Activated naive CD4-positive, alpha-beta T cell treated with anti-CD3 and anti-CD28 coated beads for 36 hours (primary cell): ENCODE measurements at regions of chr10 and their contacts with region 1.

Region 1: DNA sequence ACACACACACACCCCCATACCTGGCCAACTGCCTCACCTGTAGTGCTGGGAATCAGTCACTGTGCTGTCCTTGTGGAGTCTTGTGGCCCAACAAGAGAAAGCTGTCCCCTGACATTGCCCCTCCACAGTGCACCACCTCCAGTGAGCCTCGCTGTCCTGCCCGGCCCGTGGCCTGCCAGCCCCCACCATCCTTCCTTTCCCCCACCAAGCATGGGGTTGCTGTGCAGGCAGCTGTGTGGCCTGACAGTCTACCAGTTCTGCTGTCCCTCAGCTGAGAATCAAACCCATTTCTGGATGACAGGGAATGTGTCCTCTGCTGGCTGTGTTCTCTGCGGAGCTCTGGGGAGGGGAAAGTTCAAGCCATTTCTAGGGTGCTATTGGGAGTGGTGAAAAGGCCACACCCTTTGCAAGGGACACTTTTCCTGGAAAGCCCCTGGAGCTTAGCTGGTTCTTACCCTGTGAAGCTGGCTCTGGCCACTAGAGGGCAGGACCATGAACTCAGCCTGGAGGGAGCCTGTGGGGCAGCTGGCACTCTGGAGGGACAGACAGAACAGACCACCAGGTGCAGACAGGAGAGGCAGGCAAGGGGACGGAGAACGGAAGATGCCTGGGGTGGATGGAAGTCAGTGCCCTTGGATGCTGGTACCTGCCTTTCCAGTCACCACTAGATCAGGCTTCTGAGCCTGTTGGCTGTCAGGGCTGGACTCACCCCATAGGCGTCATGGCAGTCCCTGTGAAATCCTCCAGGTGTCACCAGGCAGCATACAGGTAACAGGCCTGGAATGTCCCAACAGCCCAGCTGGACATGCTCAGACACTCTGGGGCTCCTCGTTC is 10.5 kb upstream of the MTPAP start:
- DNase-seq: peak; percentile 78
- H3K4me3 Mint-ChIP-seq: no peak overlapping the region
- H3K27ac Mint-ChIP-seq: no peak overlapping the region
- H3K4me1 Mint-ChIP-seq: peaks cover 2% of the 10 kb centered on the region
- H3K27me3 Mint-ChIP-seq: no peaks in the 10 kb centered on the region

Region 2: DNA sequence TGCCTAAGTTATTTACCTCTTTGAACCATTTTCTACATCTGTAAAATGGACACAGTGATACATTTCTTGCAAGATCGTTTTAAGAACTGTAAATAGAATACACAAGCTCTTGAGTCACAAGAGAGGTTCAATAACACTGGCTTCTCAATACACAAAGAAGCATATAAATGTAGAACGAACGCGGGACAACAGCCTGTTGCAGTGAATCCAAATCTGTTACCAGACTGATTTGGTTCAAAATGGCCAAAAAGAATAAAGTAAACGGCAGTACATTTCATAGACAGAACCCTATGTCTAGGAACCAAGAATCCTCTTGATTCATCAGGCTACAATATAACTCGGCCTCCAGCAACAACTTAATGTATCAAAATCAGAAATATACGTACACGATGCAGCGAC is 11.2 kb before region 1 on chr10:
- CTCF ChIA-PET with region 1: interaction called, 35 read pairs
- intact Hi-C with region 1: no loop called
- DNase-seq: no peak
- H3K4me3 Mint-ChIP-seq: peak overlapping the region; percentile 96
- H3K27ac Mint-ChIP-seq: peak overlapping the region; percentile 95
- H3K4me1 Mint-ChIP-seq: peaks cover 41% of the 10 kb centered on the region
- H3K27me3 Mint-ChIP-seq: no peaks in the 10 kb centered on the region

Region 3: DNA sequence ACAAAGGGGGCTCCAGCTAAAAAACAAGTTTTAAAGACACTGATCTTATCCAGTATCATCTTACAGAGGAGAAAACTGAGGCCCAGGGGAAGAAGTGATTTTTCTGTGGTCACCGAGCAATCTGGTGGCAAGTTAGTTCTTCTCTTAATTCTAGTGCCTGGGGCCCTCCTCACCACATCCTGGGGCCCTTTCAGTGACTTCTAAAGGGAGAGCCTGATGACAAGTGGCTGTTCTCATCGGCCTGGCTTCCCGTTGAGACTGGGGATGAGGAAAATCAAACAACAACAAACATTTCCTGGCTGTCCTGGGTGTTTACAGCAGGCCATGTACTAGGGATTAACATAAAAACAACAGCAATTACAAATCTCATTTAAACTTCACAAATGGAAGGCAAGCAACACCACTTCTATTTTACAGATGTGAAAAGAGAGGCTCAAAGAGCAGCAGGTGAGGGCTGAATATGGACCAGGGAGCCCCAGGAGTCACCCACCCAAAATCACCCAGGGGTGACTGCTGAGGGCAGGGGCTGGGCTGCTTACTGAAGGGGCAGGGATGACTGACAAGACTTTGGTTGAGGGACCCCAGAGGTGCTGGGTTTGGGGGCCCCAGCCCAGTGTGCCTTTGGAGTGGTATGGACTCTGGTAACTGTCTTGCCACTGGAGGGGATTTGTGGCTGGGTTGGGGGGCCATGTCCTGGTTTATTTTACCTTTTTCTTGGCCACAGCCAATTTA is 14.2 kb after region 1 on chr10:
- CTCF ChIA-PET with region 1: interaction called, 17 read pairs
- intact Hi-C with region 1: loop called (anchors 1 kb)
- DNase-seq: peak; percentile 77
- H3K4me3 Mint-ChIP-seq: no peak overlapping the region
- H3K27ac Mint-ChIP-seq: peak overlapping the region; percentile 74
- H3K4me1 Mint-ChIP-seq: peaks cover 25% of the 10 kb centered on the region
- H3K27me3 Mint-ChIP-seq: no peaks in the 10 kb centered on the region

Region 4: GRCh38 chr10:30384701-30385201 is 25.2 kb after region 1 on chr10:
- CTCF ChIA-PET with region 1: interaction called, 17 read pairs
- intact Hi-C with region 1: loop called (anchors 1 kb)
- DNase-seq: peak; percentile 38
- H3K4me3 Mint-ChIP-seq: no peak overlapping the region
- H3K27ac Mint-ChIP-seq: no peak overlapping the region
- H3K4me1 Mint-ChIP-seq: no peaks in the 10 kb centered on the region
- H3K27me3 Mint-ChIP-seq: peaks cover 2% of the 10 kb centered on the region